BJ (cell line): ENCODE measurements at regions of chr1 and their contacts with region 1.

Region 1: GRCh38 chr1:45303582-45304310 is 22.9 kb upstream of the HPDL start:
- DNase-seq: peak; percentile 90
- H3K4me3 ChIP-seq: peak overlapping the region; percentile 70
- H3K27me3 ChIP-seq: no peaks in the 10 kb centered on the region
- CTCF ChIP-seq: peak; percentile 73

Region 2: DNA sequence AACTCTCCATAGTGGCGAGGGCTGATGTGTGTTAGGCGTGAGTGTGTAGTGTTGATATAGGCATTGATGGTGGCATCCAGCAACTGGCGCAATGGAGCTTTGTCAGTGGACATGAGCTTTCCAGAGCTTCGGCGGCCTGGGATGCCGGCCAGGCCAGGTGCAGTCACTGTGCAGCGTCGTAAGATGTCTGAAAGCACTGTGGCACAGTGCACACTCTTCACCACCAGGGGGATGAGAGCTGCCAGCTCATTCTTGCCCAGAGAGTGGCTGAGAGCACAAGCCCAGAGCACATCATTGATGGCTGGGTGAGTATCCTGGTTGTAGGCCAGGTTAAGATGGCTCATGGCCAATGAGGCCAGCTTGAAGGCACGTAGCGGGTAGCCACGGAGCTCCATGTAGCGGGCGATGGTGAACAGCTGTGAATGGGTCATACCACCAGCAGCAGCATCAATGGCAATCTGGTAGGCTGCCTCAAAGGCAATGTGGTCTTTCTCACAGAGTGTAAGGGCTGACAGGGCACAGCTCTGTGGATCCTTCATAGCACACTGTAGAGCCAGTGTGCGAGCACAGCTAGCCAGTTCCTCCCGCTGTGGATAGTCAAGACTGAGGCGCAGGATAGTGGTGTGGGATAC is 285.0 kb before region 1 on chr1:
- CTCF ChIA-PET with region 1: interaction called, 181 read pairs
- POLR2A ChIA-PET with region 1: interaction called, 5 read pairs
- DNase-seq: no peak
- H3K4me3 ChIP-seq: no peak overlapping the region
- H3K27me3 ChIP-seq: no peaks in the 10 kb centered on the region
- CTCF ChIP-seq: peak; percentile 88

Region 3: GRCh38 chr1:45282351-45282750 is 21.4 kb before region 1 on chr1:
- CTCF ChIA-PET with region 1: interaction called, 10 read pairs
- POLR2A ChIA-PET with region 1: no interaction called
- DNase-seq: no peak
- H3K4me3 ChIP-seq: no peak overlapping the region
- H3K27me3 ChIP-seq: no peaks in the 10 kb centered on the region
- CTCF ChIP-seq: no peak

Region 4: GRCh38 chr1:45669859-45670655 is 366.3 kb after region 1 on chr1:
- CTCF ChIA-PET with region 1: no interaction called
- POLR2A ChIA-PET with region 1: interaction called, 15 read pairs
- DNase-seq: no peak
- H3K4me3 ChIP-seq: no peak overlapping the region
- H3K27me3 ChIP-seq: no peaks in the 10 kb centered on the region
- CTCF ChIP-seq: no peak